Heart right ventricle (tissue), 16 donors: ENCODE measurements at regions of chr1 and their contacts with region 1.

Region 1: DNA sequence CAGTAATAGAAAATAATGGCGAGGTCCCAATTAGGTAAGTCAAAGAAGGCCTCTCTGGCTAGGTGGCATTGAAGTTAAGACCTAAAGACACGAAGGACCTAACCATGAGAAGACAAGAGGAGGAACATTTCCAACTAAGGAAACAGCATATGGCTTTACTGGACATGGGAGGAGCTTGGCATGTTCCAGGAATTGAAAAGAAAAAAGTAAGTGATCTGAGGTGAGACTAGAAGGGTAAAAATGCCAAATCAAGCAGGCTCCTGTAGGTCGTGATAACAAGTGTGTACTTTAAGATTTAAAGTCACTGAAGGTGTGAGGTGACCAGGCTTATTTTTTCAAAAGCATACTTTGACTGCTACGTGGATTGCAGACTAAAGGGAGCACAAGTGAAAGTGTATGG is 13.4 kb upstream of the CLCC1 start:
- DNase-seq: no peak
- ATAC-seq: no peak
- H3K4me3 ChIP-seq: no peak overlapping the region
- H3K27ac ChIP-seq: no peak overlapping the region
- H3K4me1 ChIP-seq: no peaks in the 10 kb centered on the region
- H3K27me3 ChIP-seq: no peaks in the 10 kb centered on the region
- CTCF ChIP-seq: no peak

Region 2: DNA sequence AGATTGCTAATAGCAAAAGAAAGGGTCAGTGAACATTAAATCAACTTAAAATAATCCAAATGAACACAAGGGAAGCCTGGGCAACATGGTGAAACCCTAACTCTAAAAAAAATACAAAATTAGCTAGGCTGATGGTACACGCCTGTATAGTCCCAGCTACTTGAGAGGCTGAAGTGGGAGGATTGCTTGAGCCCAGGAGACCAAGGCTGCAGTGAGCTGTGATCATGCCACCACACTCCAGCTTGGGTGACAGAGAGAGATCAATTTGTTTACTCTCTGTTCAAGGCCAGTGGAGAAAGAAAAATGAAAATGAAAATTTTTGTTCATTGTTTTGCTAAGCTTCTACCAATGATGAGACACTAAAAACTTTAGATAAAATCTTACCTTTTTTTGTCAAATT is 40.5 kb after region 1 on chr1:
- intact Hi-C with region 1: loop called in 1 of 10 experiments (anchors 5 kb)
- DNase-seq: no peak
- ATAC-seq: no peak
- H3K4me3 ChIP-seq: no peak overlapping the region
- H3K27ac ChIP-seq: no peak overlapping the region
- H3K4me1 ChIP-seq: no peaks in the 10 kb centered on the region
- H3K27me3 ChIP-seq: no peaks in the 10 kb centered on the region
- CTCF ChIP-seq: no peak